PC-9 (cell line): ENCODE measurements at regions of chr3 and their contacts with region 1.

Region 1: GRCh38 chr3:155323063-155323666 is 29.7 kb upstream of the STRIT1 start:
- DNase-seq: peak; percentile 39 to 62
- H3K4me3 ChIP-seq: no peak overlapping the region
- H3K27ac ChIP-seq: no peak overlapping the region
- H3K4me1 ChIP-seq: no peaks in the 10 kb centered on the region
- H3K27me3 ChIP-seq: no peaks in the 10 kb centered on the region
- CTCF ChIP-seq: peak; percentile 91

Region 2: DNA sequence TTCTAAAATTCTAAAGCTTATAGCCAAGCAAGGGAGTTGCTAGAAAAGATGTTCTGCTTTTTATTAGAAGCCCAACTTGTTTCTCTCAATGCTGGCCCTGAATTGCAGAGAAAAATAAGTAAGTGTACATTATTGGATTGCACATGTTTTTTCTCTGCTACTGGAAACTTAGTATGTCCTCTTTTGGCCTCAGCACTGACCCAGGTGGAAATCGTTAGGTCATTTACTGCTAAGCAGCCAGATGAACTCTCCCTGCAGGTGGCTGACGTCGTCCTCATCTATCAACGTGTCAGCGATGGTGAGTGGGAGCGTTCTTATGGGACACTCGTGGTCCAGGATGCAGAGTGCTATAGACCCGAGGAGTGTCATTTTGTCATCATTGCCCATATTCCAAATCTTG is 1068.6 kb before region 1 on chr3:
- CTCF ChIA-PET with region 1: no interaction called
- POLR2A ChIA-PET with region 1: no interaction called
- intact Hi-C with region 1: no loop called
- DNase-seq: no peak
- H3K4me3 ChIP-seq: no peak overlapping the region
- H3K27ac ChIP-seq: no peak overlapping the region
- H3K4me1 ChIP-seq: no peaks in the 10 kb centered on the region
- H3K27me3 ChIP-seq: no peaks in the 10 kb centered on the region
- CTCF ChIP-seq: no peak

Region 3: DNA sequence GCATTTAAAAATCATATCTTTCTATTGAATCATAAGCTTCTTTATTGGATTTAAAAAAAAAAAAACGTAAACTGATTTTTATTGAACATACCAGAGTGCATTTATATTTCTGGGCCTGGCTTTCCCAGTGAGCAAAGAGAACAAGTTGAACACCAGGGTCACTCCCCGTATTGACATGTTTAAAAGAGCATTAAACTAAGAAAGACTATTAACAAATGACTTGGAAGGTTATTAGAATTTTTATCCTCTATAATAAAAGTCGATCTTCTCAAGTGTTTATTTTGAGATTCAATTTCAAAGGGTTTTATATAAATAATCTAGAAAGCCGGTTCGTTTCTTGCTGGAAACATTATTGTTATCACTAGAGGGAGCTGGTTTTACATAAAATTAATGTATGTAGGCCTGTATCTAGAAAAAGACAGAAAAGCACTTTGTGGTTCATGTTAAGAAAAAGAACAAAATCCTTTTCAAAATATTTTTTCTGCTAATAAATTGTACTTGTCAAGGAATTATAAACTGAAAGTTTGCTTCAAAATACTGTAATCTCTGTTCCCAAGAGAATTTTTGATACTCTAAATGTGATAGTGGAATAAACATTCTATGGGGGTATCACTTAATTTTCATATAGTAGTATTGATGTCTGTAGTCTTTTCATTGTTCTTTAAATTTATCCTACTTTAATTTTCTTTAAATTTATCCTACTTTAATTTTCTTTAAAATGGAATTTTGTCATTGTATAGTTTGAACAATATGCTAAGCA is 564.9 kb before region 1 on chr3:
- CTCF ChIA-PET with region 1: no interaction called
- POLR2A ChIA-PET with region 1: no interaction called
- intact Hi-C with region 1: loop called (anchors 2 kb)
- DNase-seq: no peak
- H3K4me3 ChIP-seq: no peak overlapping the region
- H3K27ac ChIP-seq: no peak overlapping the region
- H3K4me1 ChIP-seq: no peaks in the 10 kb centered on the region
- H3K27me3 ChIP-seq: no peaks in the 10 kb centered on the region
- CTCF ChIP-seq: peak; percentile 67

Region 4: DNA sequence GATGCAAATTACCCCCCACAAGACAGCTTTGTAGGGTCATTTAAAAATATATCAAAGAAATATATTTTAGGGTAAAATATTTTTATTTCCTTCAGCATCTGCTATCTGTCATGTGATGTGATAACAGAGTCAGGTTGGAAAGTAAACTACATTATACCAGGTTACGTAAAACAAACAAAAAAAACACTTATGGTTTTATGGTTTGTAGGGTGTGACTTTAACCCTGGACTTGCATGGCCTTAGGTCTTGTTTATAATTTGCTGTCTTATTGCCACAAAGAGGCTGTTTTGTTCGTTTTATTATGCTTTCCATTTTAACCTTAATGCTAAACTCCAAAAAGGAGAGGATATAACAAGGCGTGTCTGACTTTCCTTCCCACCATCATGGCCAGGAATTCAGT is 487.5 kb before region 1 on chr3:
- CTCF ChIA-PET with region 1: no interaction called
- POLR2A ChIA-PET with region 1: no interaction called
- intact Hi-C with region 1: no loop called
- DNase-seq: no peak
- H3K4me3 ChIP-seq: no peak overlapping the region
- H3K27ac ChIP-seq: no peak overlapping the region
- H3K4me1 ChIP-seq: no peaks in the 10 kb centered on the region
- H3K27me3 ChIP-seq: no peaks in the 10 kb centered on the region
- CTCF ChIP-seq: no peak

Region 5: DNA sequence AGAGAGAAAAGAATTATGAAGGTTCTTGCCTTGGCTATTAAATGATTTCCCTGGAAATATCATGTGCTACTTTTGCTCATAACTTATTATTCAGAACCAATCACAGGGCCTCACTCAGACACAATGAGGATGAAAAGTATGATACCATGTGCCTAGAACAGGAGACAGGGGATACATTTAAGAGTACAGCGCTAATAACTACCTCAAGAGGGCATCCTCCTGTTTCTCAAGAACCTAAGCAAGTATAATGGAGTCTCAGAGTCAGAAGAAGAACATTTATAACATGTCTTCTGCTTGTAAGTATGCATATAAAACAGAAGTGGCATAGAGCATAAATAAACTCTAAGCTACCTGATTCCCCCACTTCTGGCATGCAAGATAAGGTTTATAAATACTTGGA is 368.4 kb before region 1 on chr3:
- CTCF ChIA-PET with region 1: no interaction called
- POLR2A ChIA-PET with region 1: no interaction called
- intact Hi-C with region 1: loop called (anchors 1 kb)
- DNase-seq: no peak
- H3K4me3 ChIP-seq: no peak overlapping the region
- H3K27ac ChIP-seq: no peak overlapping the region
- H3K4me1 ChIP-seq: no peaks in the 10 kb centered on the region
- H3K27me3 ChIP-seq: no peaks in the 10 kb centered on the region
- CTCF ChIP-seq: no peak

Region 6: GRCh38 chr3:155178810-155179436 is 144.2 kb before region 1 on chr3:
- CTCF ChIA-PET with region 1: no interaction called
- POLR2A ChIA-PET with region 1: no interaction called
- intact Hi-C with region 1: loop called (anchors 5 kb)
- DNase-seq: no peak
- H3K4me3 ChIP-seq: no peak overlapping the region
- H3K27ac ChIP-seq: no peak overlapping the region
- H3K4me1 ChIP-seq: no peaks in the 10 kb centered on the region
- H3K27me3 ChIP-seq: no peaks in the 10 kb centered on the region
- CTCF ChIP-seq: no peak

Region 7: GRCh38 chr3:155270485-155271342 is 52.5 kb before region 1 on chr3:
- CTCF ChIA-PET with region 1: no interaction called
- POLR2A ChIA-PET with region 1: no interaction called
- intact Hi-C with region 1: loop called (anchors 2 kb)
- DNase-seq: peak; percentile 74 to 79
- H3K4me3 ChIP-seq: peak overlapping the region; percentile 49
- H3K27ac ChIP-seq: peak overlapping the region; percentile 98
- H3K4me1 ChIP-seq: peaks cover 33% of the 10 kb centered on the region
- H3K27me3 ChIP-seq: no peaks in the 10 kb centered on the region
- CTCF ChIP-seq: 0 out of 2 replicates have a peak, but pooled peaks have one; percentile 27